ENCODE measurements at regions of chr2 and their contacts with region 1.

Region 1: GRCh38 chr2:8681786-8682692 is at the start of gene ID2:
- H3K4me3 ChIP-seq: peak within 1 kb of the TSS; percentile 93
- H3K27ac ChIP-seq: peak within 1 kb of the TSS; percentile 97
- H3K4me1 ChIP-seq: peaks cover 6% of the 10 kb centered on the region
- CTCF ChIP-seq: no peak

Region 2: GRCh38 chr2:8312861-8313830 is 368.9 kb before region 1 on chr2:
- CTCF ChIA-PET with region 1: no interaction called
- POLR2A ChIA-PET with region 1: interaction called, 27 read pairs
- H3K4me3 ChIP-seq: no peak overlapping the region
- H3K27ac ChIP-seq: no peak overlapping the region
- H3K4me1 ChIP-seq: peaks cover 3% of the 10 kb centered on the region; the same call in 1 of the 2 replicates
- CTCF ChIP-seq: no peak

Region 3: DNA sequence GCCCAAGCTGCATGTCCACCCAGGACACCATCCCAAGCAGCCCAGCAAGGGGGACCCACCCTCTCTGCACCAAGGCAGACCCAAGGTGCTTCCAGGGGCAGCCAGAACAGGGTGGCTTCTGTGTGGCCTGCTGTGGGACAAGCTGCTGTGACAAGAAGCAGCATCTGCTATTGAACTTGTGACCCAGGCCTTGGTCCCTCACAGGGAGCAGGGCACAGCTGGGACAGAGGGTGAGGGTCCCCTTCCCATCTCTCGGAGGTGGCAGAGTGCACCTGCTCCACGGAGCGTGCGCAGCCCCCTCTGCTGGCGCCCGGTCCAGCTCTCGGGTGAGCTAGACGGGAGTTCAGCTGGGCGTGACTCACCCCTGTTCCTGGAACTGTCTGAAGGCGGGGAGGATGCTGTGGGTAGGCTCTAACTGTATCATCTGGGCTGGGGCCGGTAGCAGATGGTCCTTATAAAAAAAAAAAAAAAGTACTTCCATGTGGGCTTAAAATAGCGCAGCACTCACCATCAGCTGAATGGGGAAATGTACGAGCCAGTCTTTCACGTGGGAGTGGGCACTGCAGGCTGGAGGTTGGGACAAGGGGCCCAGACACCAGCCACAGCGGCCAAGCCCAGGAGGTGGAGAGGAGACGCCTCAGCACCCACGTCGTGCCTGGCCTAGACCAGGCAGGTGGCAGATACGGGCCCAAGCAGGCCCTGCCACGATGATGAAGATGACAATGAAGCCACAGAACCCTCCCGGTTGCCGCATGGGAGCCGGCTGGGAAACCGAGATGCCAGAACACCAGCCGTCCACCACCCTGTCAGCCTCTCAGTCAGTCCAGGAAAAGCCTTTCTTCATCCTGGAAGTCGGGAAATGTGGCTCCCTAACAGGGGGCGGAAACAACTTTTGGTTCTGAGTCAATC is 137.0 kb before region 1 on chr2:
- CTCF ChIA-PET with region 1: no interaction called
- POLR2A ChIA-PET with region 1: interaction called, 11 read pairs
- H3K4me3 ChIP-seq: no peak overlapping the region
- H3K27ac ChIP-seq: no peak overlapping the region
- H3K4me1 ChIP-seq: no peaks in the 10 kb centered on the region
- CTCF ChIP-seq: 0 out of 2 replicates have a peak, but pooled peaks have one; percentile 32

Region 4: GRCh38 chr2:8590975-8591374 is 91.1 kb before region 1 on chr2:
- CTCF ChIA-PET with region 1: no interaction called
- POLR2A ChIA-PET with region 1: interaction called, 15 read pairs
- H3K4me3 ChIP-seq: no peak overlapping the region
- H3K27ac ChIP-seq: no peak overlapping the region
- H3K4me1 ChIP-seq: no peaks in the 10 kb centered on the region
- CTCF ChIP-seq: no peak

Region 5: GRCh38 chr2:8669157-8669817 is 12.8 kb before region 1 on chr2:
- CTCF ChIA-PET with region 1: no interaction called
- POLR2A ChIA-PET with region 1: interaction called, 13 read pairs
- H3K4me3 ChIP-seq: no peak overlapping the region
- H3K27ac ChIP-seq: no peak overlapping the region
- H3K4me1 ChIP-seq: no peaks in the 10 kb centered on the region
- CTCF ChIP-seq: no peak

Region 6: DNA sequence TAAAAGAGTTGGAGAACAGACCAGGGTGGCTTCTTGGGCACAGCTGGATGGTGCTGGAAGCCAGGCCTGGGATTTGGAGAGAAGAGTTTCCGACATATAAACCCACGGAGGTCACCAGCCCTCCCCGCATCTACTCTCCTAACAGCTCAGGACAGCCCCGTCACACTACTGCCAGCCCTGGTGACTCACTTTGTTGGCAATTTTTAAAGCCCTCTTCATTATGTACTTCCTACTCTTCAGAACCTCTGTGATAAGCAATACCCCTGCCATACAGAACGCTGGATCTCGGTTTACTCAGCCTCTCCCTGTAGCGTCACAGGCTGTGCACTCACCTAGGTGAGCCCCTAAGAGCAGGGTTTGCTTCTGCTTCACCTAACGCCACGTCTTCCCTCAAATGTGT is 47.9 kb after region 1 on chr2:
- CTCF ChIA-PET with region 1: no interaction called
- POLR2A ChIA-PET with region 1: no interaction called
- H3K4me3 ChIP-seq: no peak overlapping the region
- H3K27ac ChIP-seq: no peak overlapping the region
- H3K4me1 ChIP-seq: no peaks in the 10 kb centered on the region
- CTCF ChIP-seq: no peak

Region 7: GRCh38 chr2:8779795-8780671 is 98.0 kb after region 1 on chr2:
- CTCF ChIA-PET with region 1: no interaction called
- POLR2A ChIA-PET with region 1: no interaction called
- H3K4me3 ChIP-seq: no peak overlapping the region
- H3K27ac ChIP-seq: no peak overlapping the region
- H3K4me1 ChIP-seq: no peaks in the 10 kb centered on the region
- CTCF ChIP-seq: no peak